ENCODE measurements at regions of chr2 and their contacts with region 1.

Region 1: GRCh38 chr2:231399853-231400680 is 4.6 kb downstream of the B3GNT7 start:
- DNase-seq: no peak
- ATAC-seq: peak; percentile 45
- H3K4me3 ChIP-seq: no peak overlapping the region
- H3K27ac ChIP-seq: no peak overlapping the region
- H3K4me1 ChIP-seq: peaks cover 8% of the 10 kb centered on the region
- H3K27me3 ChIP-seq: peaks cover 15% of the 10 kb centered on the region
- CTCF ChIP-seq: no peak
- POLR2A ChIP-seq: no peak
- RAD21 ChIP-seq: no peak

Region 2: DNA sequence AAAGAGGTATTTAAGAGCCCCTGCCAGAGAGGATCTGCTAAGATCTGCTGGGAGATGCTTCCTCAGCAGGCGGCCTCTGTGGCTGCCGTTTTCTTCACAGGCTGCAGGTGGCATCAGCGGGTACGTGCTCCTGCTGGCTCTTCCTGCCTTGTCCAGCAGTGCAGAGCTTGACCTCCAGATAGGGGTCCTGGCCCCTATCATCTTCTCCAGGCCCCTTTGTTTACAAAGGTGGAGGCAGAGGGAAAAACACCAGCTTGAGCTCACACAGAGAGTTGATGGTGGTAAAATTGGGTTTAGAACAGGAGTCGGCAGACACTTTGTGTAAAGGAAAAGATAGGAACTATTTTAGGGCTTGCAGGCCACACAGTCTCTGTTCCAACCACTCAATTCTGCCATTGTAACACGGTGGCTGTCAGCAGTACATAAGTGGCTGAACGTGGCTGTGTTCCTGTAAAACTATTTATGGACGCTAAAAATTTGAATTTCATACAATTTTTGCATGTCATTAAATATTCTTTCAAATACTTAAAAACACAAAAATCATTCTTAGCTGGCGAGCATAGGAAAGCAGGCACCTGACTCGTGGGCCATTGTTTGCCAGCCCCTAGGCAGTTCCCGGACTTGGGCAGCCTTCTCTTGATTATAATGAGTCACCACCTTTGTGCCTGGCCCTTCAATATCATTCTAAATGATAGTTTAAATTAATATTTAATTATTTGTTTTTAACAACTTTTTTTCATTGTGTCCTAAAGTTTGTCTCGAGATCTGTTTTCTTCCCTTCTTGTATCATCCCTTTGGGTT is 102.8 kb before region 1 on chr2:
- CTCF ChIA-PET with region 1: interaction called, 3 read pairs
- POLR2A ChIA-PET with region 1: no interaction called
- dilution Hi-C with region 1: no loop called
- in situ Hi-C with region 1: no loop called
- intact Hi-C with region 1: loop called (anchors 1 kb)
- DNase-seq: peak; percentile 54
- ATAC-seq: peak; percentile 98
- H3K4me3 ChIP-seq: no peak overlapping the region
- H3K27ac ChIP-seq: no peak overlapping the region
- H3K4me1 ChIP-seq: 0 out of 2 replicates have a peak, but pooled peaks cover 2% of the 10 kb centered on the region
- H3K27me3 ChIP-seq: no peaks in the 10 kb centered on the region
- CTCF ChIP-seq: peak; percentile 66
- POLR2A ChIP-seq: no peak
- RAD21 ChIP-seq: peak; percentile 78

Measured in IMR-90 (cell line).